ENCODE measurements at regions of chr17 and their contacts with region 1.

Region 1: DNA sequence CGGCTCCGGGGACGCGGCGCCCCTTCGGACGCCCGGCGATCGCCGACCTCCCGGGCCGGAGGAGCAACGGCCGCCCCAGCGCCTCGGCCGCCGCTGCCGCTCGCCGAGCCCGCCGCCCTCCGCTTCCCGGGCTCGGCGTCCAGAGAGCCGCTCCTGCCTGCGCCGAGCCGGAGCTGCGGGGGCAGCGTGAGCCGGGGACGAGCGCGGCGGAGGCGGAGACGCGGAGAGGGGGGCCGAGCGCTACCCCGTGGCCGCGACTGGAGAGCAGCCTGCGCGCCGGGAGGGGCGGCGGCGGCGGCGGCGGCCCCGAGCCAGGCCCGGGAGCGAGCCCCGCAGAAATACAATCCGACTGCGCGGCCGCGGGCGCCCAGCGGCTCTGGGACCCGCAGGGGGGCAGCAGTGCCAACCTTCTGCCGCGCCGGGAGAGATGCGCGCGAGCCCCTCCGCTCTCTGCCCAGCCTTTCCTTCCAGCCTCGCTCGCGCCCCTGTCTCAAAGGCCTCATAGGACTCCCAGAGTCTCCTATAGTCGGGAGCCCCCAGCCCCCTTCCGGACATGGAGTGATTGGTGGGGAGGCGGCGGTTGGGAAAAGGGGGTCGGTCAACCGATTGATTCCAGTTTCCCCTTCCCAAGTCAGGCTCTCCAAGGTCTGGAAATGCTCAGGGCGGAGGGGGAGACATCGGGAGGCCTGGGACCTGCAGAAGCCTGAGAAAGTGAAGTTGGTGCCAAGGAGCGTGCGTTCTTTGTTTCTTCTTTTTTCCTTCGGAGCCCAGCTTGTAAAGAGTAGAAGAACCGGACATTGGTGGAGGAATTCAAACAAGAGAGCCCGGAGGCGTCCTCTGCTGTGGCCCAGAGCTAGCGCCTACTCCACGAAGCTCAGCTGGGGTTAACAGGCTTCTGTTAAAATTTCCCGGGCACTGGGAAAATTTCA is 1.1 kb upstream of the SDK2 start:
- DNase-seq: peak; percentile 66
- H3K4me3 ChIP-seq: peak overlapping the region in 2 of 3 experiments; percentile 67 to 79
- H3K27ac ChIP-seq: no peak overlapping the region
- H3K4me1 ChIP-seq: peaks cover 12% of the 10 kb centered on the region
- H3K27me3 ChIP-seq: no peaks in the 10 kb centered on the region
- CTCF ChIP-seq: no peak

Region 2: DNA sequence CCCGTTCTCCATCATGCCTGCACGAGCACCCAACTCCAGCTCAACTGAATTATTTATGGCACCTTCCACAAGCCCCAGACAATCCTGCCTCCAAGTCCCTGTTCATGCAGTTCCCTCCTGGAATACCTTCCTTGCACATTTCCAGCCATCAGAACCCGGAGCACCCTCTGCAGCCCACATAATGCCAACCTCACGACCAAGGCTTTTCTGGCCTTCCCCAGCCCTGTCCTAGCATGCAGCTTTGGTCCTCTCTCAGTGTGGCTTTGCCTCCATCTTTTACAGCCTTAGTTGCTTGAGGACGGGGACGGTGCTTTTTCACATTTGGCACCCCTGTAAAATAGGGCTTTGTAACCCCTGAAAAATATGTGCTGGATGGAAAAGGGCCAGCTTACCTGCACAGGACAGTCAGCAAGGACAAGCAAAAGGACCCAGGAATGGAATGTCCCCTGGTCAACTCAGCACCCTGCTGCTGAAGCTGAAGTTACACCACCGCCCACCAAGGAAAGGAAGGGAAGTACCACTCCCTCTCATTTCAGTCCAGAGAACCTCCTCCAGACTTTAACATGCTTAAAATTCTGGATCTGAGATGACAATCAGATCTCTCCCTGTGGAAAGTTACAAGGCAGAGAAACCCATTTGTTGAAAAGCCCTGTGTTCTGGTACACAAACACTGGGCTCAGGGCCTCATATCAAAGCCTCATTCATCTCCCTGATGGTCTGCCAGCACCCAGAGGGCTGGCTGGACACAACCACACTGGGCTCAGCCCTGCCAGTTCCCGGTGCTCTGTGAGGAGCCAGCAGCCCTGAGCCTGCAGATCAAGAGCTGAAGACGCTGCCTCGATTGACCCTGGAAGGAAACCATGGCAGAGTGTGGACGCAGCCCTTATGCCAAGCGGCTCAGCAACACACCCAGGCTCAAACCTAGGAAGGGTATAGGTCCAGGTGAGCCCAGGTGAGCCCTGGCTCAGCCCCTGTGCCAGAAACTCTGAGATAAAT is 555.7 kb before region 1 on chr17:
- CTCF ChIA-PET with region 1: no interaction called
- dilution Hi-C with region 1: no loop called
- in situ Hi-C with region 1: no loop called
- intact Hi-C with region 1: no loop called
- DNase-seq: no peak
- H3K4me3 ChIP-seq: no peak overlapping the region
- H3K27ac ChIP-seq: no peak overlapping the region
- H3K4me1 ChIP-seq: peaks cover 7% of the 10 kb centered on the region
- H3K27me3 ChIP-seq: no peaks in the 10 kb centered on the region
- CTCF ChIP-seq: no peak

Region 3: GRCh38 chr17:73474370-73474988 is 170.8 kb before region 1 on chr17:
- CTCF ChIA-PET with region 1: no interaction called
- dilution Hi-C with region 1: no loop called
- in situ Hi-C with region 1: no loop called
- intact Hi-C with region 1: loop called (anchors 5 kb)
- DNase-seq: peak; percentile 75
- H3K4me3 ChIP-seq: no peak overlapping the region
- H3K27ac ChIP-seq: no peak overlapping the region
- H3K4me1 ChIP-seq: peaks cover 8% of the 10 kb centered on the region
- H3K27me3 ChIP-seq: no peaks in the 10 kb centered on the region
- CTCF ChIP-seq: no peak

Region 4: DNA sequence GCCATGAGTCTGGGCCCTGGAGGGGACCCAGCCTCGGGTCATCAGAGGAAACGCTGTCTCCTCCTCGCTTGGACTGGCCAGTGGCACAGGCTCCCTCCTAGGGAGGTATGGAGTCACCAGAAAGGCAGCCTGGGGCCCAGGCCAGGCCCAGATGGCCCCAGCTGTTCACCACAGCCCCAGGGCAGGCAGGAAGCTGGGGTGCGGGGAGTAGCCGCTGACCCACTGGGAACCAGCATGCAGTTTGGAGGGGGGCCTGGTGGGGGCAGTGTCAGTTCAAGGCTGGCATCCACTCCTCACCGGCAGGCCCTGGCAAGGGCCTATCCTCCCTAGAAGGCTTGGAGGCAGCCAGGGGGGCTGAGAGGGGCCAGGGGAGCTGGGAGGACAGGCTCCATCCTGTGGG is 49.8 kb before region 1 on chr17:
- CTCF ChIA-PET with region 1: no interaction called
- dilution Hi-C with region 1: no loop called
- in situ Hi-C with region 1: loop called in 1 of 2 experiments (anchors 10 kb)
- intact Hi-C with region 1: loop called (anchors 1 kb)
- DNase-seq: peak; percentile 51
- H3K4me3 ChIP-seq: no peak overlapping the region
- H3K27ac ChIP-seq: no peak overlapping the region
- H3K4me1 ChIP-seq: peaks cover 14% of the 10 kb centered on the region
- H3K27me3 ChIP-seq: no peaks in the 10 kb centered on the region
- CTCF ChIP-seq: peak; percentile 64 to 91

Region 5: DNA sequence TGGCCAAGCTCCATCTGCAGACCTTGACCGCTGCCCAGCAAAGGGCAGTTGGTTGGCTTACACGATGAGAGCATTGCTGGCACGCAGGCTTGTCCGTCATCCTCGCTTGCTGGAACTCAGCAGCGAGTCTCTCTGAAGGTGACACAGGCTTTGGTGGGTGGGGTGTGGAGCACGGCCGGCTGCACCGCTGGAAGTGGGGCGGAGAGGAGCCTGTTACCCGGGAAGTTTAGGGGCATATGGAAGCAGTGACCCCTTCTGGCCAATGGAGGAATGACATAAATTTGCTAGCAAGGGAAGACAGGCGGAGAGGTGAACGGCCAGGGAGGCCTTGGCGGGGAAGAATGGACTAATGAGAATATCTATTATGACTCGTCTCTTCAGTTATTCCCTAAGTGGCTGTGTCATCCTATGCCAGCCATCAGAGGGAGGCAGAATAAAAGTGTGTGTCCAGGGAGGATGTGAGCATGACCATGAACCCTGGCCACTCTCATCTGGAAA is 64.8 kb after region 1 on chr17:
- CTCF ChIA-PET with region 1: interaction called, 5 read pairs
- dilution Hi-C with region 1: no loop called
- in situ Hi-C with region 1: no loop called
- intact Hi-C with region 1: loop called (anchors 1 kb)
- DNase-seq: peak; percentile 61
- H3K4me3 ChIP-seq: no peak overlapping the region
- H3K27ac ChIP-seq: no peak overlapping the region
- H3K4me1 ChIP-seq: peaks cover 25% of the 10 kb centered on the region
- H3K27me3 ChIP-seq: no peaks in the 10 kb centered on the region
- CTCF ChIP-seq: peak; percentile 81 to 86

Region 6: GRCh38 chr17:73929860-73930430 is 284.6 kb after region 1 on chr17:
- CTCF ChIA-PET with region 1: no interaction called
- dilution Hi-C with region 1: no loop called
- in situ Hi-C with region 1: no loop called
- intact Hi-C with region 1: no loop called
- DNase-seq: no peak
- H3K4me3 ChIP-seq: no peak overlapping the region
- H3K27ac ChIP-seq: no peak overlapping the region
- H3K4me1 ChIP-seq: no peaks in the 10 kb centered on the region
- H3K27me3 ChIP-seq: no peaks in the 10 kb centered on the region
- CTCF ChIP-seq: no peak

Region 7: GRCh38 chr17:73956669-73957465 is 311.6 kb after region 1 on chr17:
- CTCF ChIA-PET with region 1: no interaction called
- dilution Hi-C with region 1: no loop called
- in situ Hi-C with region 1: no loop called
- intact Hi-C with region 1: loop called (anchors 5 kb)
- DNase-seq: peak; percentile 12
- H3K4me3 ChIP-seq: no peak overlapping the region
- H3K27ac ChIP-seq: no peak overlapping the region
- H3K4me1 ChIP-seq: peaks cover 4% of the 10 kb centered on the region
- H3K27me3 ChIP-seq: peaks cover 12% of the 10 kb centered on the region
- CTCF ChIP-seq: peak; percentile 45 to 54

Region 8: DNA sequence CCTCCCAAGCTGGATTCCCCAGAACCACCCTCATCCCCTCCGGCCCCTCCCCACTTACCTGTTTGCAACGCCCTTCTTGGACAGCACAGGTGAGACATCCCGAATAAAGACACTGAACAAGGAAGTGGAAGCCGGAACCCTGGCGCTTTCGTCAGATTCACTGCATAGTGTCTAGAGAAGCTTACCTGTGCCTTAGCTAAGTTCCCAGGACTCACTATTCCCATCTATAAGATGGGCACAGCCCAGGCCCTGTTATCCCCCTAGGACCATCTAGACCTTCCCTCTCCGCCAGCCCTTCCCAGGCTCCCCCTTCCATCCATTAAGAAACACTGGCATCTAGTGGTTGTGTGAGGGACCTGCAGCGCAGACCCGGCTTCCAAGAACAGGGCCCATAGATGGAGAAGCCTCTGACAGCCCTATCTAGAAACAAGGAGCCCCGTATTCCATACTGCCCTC is 531.3 kb after region 1 on chr17:
- CTCF ChIA-PET with region 1: no interaction called
- dilution Hi-C with region 1: no loop called
- in situ Hi-C with region 1: no loop called
- intact Hi-C with region 1: loop called (anchors 5 kb)
- DNase-seq: peak; percentile 52
- H3K4me3 ChIP-seq: no peak overlapping the region
- H3K27ac ChIP-seq: no peak overlapping the region
- H3K4me1 ChIP-seq: no peaks in the 10 kb centered on the region
- H3K27me3 ChIP-seq: no peaks in the 10 kb centered on the region
- CTCF ChIP-seq: peak; percentile 83 to 91

Measured in mammary epithelial cell (primary cell).